ENCODE measurements at regions of chr1 and their contacts with region 1.

Region 1: GRCh38 chr1:18913065-18913835 is 10.9 kb upstream of the ALDH4A1 start:
- DNase-seq: peak; percentile 64
- H3K4me3 ChIP-seq: no peak overlapping the region
- H3K27ac ChIP-seq: no peak overlapping the region
- H3K4me1 ChIP-seq: peaks cover 3% of the 10 kb centered on the region
- CTCF ChIP-seq: peak; percentile 100

Region 2: DNA sequence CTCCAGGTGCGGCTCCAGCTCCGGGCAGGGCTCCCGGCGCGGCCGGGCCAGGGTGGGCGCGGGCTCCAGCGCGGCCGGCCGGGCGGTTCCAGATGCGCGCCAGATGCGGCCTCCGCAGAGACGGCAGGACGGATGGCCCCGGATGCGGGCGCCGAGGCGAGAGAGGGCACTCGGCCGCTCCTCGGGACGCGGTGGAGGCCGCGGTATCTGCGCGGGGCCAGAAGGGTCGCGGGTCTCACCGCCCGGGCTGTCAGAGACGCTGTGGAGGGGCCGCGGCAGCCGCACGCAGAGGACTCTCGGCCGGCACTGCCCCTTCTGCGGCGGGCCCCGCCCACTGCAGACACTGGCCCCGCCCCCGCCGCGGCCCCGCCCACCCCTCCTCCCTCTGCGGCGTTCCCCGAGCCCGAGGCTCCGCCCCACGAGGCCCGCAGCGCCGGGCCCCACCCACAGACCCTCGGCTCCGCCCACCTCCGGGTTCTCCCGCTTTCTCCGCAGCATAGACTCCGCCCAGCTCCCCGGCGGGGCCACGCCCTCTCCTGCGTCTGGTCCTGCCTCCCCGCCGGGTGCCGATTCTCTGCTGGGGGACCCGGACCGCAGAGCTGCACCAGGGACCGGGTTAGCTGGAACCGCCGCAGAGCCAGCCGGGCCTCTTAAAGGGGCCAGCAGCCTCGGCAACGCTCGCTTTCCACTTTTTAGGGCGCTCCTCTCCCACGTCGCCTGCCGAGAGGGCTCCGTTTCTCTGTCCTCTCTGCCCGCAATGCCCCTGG is 43.3 kb after region 1 on chr1 and contains the start of gene IFFO2:
- CTCF ChIA-PET with region 1: no interaction called
- POLR2A ChIA-PET with region 1: no interaction called
- intact Hi-C with region 1: loop called (anchors 5 kb)
- DNase-seq: peak; percentile 90
- H3K4me3 ChIP-seq: peak within 1 kb of the TSS; percentile 67
- H3K27ac ChIP-seq: no peak within 1 kb of the TSS
- H3K4me1 ChIP-seq: peaks cover 7% of the 10 kb centered on the region
- CTCF ChIP-seq: no peak
- total RNA-seq, gene IFFO2: 0.06 and 0.08 TPM in 2 replicates

Measured in OCI-LY7 (cell line).